ENCODE measurements at regions of chr15 and their contacts with region 1.

Region 1: GRCh38 chr15:59797756-59798604 is 108.9 kb upstream of the BNIP2 start:
- DNase-seq: no peak
- ATAC-seq: peak; percentile 4 to 10
- H3K4me3 Mint-ChIP-seq: peak overlapping the region; percentile 37 to 77 (median 64)
- H3K27ac Mint-ChIP-seq: peak overlapping the region; percentile 76 to 94 (median 89)
- H3K4me1 Mint-ChIP-seq: peaks cover 32 to 79% (median 75%) of the 10 kb centered on the region in 4 donors
- H3K27me3 Mint-ChIP-seq: peaks cover 0 to 1% (median 0%) of the 10 kb centered on the region in 5 donors

Region 2: DNA sequence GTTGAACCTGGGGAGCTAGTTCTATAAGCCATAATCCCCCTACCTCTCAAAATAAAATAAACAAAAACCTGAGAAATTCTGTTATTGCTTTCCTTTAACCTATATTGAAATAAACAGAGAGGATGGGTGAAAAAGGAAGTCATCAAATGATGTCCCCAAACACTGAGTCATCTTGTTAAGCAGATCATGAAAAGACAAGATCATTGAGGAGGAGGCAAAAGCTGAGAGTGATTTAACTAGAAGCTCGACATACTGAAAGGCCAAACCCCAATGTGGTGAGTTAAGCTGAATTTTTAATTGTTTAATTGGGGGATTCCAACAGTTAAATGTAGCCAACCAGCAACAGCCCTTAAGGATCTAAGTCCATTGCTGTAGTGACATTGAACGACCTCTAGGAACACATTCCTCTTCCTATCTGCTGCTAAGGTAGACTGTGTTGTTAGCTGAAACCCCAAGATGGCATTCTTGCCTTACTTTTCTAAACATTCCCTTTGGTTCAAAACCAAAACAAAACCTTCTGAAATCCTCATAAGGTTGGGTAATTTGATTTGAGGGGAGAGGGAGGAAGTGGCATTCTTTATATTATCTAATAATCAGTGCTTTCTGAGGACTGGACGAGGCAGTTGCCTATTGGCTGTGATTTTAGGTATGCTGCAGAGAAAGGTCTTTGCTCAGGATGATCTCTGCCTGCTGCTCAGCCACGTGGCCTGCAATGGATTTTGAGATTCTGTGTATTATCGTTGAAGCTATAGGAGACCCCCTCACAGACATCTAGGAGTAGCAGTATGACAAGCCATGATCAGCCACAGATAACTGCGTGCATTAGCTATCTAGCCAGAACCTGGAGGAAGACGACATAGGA is 46.2 kb before region 1 on chr15:
- POLR2A ChIA-PET with region 1: interaction called, 11 read pairs
- DNase-seq: peak in 5 of 10 donors; percentile 18 to 75 (median 57)
- ATAC-seq: peak; percentile 99 to 100
- H3K4me3 Mint-ChIP-seq: peak overlapping the region in 1 of 10 donors; percentile 5
- H3K27ac Mint-ChIP-seq: peak overlapping the region in 5 of 10 donors; percentile 1 to 28 (median 11)
- H3K4me1 Mint-ChIP-seq: peaks cover 2 to 16% (median 11%) of the 10 kb centered on the region in 4 donors
- H3K27me3 Mint-ChIP-seq: peaks cover 0 to 5% (median 0%) of the 10 kb centered on the region in 5 donors

Region 3: DNA sequence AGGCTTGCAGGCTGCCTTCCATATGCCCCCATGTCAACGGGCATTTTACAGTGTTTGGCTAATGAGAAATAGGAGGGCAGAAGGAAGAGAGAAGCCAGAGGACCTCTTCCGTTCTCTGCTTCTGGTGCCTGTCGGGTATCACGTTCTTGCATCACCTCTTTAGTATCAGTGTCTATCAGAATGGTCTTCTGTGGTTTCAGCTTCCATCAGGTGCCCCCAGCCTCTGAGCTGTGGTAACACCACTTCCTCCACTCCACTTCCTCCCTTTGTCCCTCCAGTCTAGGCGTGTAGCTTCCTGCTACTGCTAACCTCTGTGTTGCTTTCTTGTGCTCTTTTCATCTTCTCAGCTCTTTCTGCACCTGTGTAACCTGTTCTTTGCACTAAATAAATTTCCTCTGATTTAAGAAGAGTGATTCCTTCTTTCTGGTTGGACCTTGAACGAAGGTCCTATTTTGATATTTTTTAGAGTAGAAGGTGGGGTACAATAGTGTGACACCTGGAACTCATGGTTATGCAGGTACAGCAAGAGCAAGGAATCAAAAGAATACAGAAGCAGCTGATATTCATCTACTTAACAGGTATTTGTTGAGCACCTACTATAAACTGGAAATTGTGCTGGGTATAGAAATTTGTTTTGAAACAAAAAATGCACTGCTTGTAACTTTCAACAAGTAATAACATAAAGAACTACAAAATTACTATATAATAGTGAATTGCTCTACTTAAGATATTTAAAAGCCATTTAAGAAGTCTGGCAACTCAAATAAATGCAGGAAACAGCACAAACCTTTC is 178.7 kb after region 1 on chr15:
- POLR2A ChIA-PET with region 1: no interaction called
- DNase-seq: peak in 9 of 10 donors; percentile 24 to 91 (median 73)
- ATAC-seq: peak; percentile 98 to 99
- H3K4me3 Mint-ChIP-seq: peak overlapping the region; percentile 16 to 79 (median 70)
- H3K27ac Mint-ChIP-seq: peak overlapping the region; percentile 4 to 87 (median 79)
- H3K4me1 Mint-ChIP-seq: peaks cover 15 to 34% (median 29%) of the 10 kb centered on the region in 4 donors
- H3K27me3 Mint-ChIP-seq: peaks cover 0 to 20% (median 4%) of the 10 kb centered on the region in 5 donors

Measured in naive thymus-derived CD8-positive, alpha-beta T cell (primary cell).